ENCODE measurements at regions of chr12 and their contacts with region 1.

Region 1: GRCh38 chr12:39272871-39273770 is 169.8 kb downstream of the KIF21A start:
- DNase-seq: peak; percentile 67
- H3K4me3 ChIP-seq: no peak overlapping the region
- H3K27ac ChIP-seq: no peak overlapping the region
- H3K4me1 ChIP-seq: no peaks in the 10 kb centered on the region
- H3K27me3 ChIP-seq: peaks cover 7 to 9% of the 10 kb centered on the region in 2 experiments
- CTCF ChIP-seq: peak; percentile 57 to 67
- POLR2A ChIP-seq: no peak

Region 2: DNA sequence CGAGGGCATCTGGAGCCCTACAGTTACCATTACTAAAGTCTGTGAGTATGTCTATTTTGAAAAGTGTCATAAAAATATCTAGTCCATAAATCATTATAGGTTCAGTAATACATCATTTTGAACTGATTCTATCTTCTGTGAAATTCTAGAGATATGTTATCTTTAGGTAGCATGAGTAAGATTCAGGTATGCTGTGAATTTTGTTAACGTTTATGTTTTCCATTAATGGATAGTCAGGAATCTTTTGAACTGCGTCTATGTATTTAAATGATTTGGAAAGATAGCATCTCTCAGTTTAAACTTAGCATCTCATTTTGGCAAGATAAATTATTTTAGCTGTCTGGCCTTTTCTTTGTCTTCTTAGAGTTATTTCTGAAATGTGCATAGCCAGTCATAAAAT is 948.2 kb before region 1 on chr12:
- CTCF ChIA-PET with region 1: interaction called, 35 read pairs
- POLR2A ChIA-PET with region 1: no interaction called
- dilution Hi-C with region 1: no loop called
- intact Hi-C with region 1: loop called (anchors 1 kb)
- DNase-seq: no peak
- H3K4me3 ChIP-seq: no peak overlapping the region
- H3K27ac ChIP-seq: no peak overlapping the region
- H3K4me1 ChIP-seq: no peaks in the 10 kb centered on the region
- H3K27me3 ChIP-seq: no peaks in the 10 kb centered on the region
- CTCF ChIP-seq: no peak
- POLR2A ChIP-seq: no peak

Region 3: DNA sequence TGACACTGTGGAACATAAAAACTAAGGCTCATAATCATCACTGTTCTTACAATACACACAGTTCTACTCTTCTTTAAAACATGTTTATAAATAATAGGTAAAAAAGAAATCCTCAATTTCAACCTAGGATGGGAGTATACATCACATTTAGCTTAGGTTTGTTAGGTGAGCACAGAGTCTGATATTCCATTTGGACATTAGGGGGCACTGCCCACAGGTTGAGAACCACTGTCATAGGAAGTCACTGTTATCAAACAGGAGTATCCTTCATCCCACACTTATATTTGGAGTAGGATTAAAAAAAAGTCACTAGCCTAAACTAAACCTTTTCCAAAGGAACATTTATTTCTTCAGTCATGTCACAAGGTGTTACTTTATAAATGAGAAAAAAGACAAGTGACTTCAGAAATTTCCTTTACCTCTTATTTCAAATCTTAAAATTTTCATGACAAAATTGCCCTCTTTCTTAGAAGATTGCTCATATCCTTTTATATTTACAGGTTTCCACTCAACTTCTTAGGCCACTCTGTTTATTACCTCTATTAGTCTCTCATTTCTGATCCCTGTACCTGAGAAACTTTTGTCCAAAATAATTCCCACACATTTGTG is 608.4 kb before region 1 on chr12:
- CTCF ChIA-PET with region 1: interaction called, 16 read pairs
- POLR2A ChIA-PET with region 1: no interaction called
- dilution Hi-C with region 1: no loop called
- intact Hi-C with region 1: loop called (anchors 2 kb)
- DNase-seq: peak; percentile 59
- H3K4me3 ChIP-seq: no peak overlapping the region
- H3K27ac ChIP-seq: no peak overlapping the region
- H3K4me1 ChIP-seq: no peaks in the 10 kb centered on the region
- H3K27me3 ChIP-seq: no peaks in the 10 kb centered on the region
- CTCF ChIP-seq: peak; percentile 35 to 61
- POLR2A ChIP-seq: no peak

Region 4: GRCh38 chr12:38921025-38921677 is 352.0 kb before region 1 on chr12:
- CTCF ChIA-PET with region 1: interaction called, 302 read pairs
- POLR2A ChIA-PET with region 1: no interaction called
- dilution Hi-C with region 1: no loop called
- intact Hi-C with region 1: loop called (anchors 1 kb)
- DNase-seq: peak; percentile 68
- H3K4me3 ChIP-seq: no peak overlapping the region
- H3K27ac ChIP-seq: no peak overlapping the region
- H3K4me1 ChIP-seq: no peaks in the 10 kb centered on the region
- H3K27me3 ChIP-seq: no peaks in the 10 kb centered on the region
- CTCF ChIP-seq: peak; percentile 48 to 58
- POLR2A ChIP-seq: no peak

Region 5: GRCh38 chr12:39127401-39127800 is 145.7 kb before region 1 on chr12:
- CTCF ChIA-PET with region 1: interaction called, 10 read pairs
- POLR2A ChIA-PET with region 1: no interaction called
- dilution Hi-C with region 1: no loop called
- intact Hi-C with region 1: loop called (anchors 5 kb)
- DNase-seq: peak; percentile 92
- H3K4me3 ChIP-seq: no peak overlapping the region
- H3K27ac ChIP-seq: peak overlapping the region; percentile 65
- H3K4me1 ChIP-seq: peaks cover 24% of the 10 kb centered on the region
- H3K27me3 ChIP-seq: no peaks in the 10 kb centered on the region
- CTCF ChIP-seq: no peak
- POLR2A ChIP-seq: no peak

Region 6: DNA sequence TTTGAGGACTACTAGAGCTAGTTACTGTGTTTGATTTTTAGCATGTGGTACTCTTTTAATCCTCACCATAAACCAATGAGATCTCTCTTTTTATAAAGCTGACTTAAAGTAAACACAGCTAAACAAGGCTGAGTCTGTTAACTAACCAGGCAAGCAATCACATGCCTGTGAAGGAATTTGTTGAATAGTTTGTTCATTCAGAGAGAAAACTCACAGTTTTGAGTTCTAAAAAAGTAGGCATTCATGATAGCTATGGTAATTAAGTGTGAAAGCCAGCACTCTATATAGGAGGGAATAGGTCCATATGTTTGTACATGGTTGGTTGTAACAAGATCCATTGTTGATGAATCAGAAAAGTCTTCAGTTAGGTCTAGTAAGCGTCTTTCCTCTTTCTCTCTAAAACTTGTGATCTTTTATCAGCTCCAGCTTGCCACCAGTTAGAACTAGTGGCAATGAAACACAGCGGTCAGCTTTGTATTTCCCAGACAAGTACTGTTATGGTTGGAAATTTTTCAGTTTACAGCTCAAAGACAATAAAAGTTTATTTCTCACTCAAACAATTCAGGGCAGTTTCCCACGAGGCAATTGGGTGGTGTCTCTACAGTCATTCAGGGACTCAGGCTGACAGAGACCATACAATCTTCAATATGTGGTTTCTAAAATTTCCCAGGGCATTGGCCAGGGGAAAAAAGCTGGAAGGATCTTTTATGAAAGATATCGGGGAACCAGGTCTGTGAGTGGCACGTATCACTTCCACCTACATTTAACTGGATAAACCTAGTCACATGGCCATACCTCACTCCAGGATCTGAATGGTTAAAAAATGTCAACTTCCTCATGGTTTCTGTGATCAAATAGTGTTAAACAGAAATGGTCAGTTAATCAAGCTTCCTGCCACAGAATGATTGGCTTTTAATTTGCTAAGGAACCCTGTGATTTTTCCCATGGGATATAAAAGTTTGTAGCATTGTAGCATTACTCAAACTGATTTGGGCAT is 33.3 kb before region 1 on chr12:
- CTCF ChIA-PET with region 1: interaction called, 12 read pairs
- POLR2A ChIA-PET with region 1: no interaction called
- dilution Hi-C with region 1: no loop called
- intact Hi-C with region 1: no loop called
- DNase-seq: no peak
- H3K4me3 ChIP-seq: no peak overlapping the region
- H3K27ac ChIP-seq: no peak overlapping the region
- H3K4me1 ChIP-seq: no peaks in the 10 kb centered on the region
- H3K27me3 ChIP-seq: no peaks in the 10 kb centered on the region
- CTCF ChIP-seq: no peak
- POLR2A ChIP-seq: no peak

Region 7: GRCh38 chr12:39287409-39287808 is 14.3 kb after region 1 on chr12:
- CTCF ChIA-PET with region 1: interaction called, 18 read pairs
- POLR2A ChIA-PET with region 1: no interaction called
- dilution Hi-C with region 1: no loop called
- intact Hi-C with region 1: no loop called
- DNase-seq: no peak
- H3K4me3 ChIP-seq: no peak overlapping the region
- H3K27ac ChIP-seq: no peak overlapping the region
- H3K4me1 ChIP-seq: no peaks in the 10 kb centered on the region
- H3K27me3 ChIP-seq: peaks cover 0 to 4% of the 10 kb centered on the region in 2 experiments
- CTCF ChIP-seq: no peak
- POLR2A ChIP-seq: no peak